Thyroid gland (tissue), 4 donors: ENCODE measurements at regions of chr4 and their contacts with region 1.

Region 1: GRCh38 chr4:153573881-153574802 is 108.0 kb downstream of the TMEM131L start:
- DNase-seq: peak; percentile 58 to 60
- H3K4me3 ChIP-seq: no peak overlapping the region
- H3K27ac ChIP-seq: no peak overlapping the region
- H3K4me1 ChIP-seq: peaks cover 8 to 37% of the 10 kb centered on the region in 2 donors
- H3K27me3 ChIP-seq: no peaks in the 10 kb centered on the region
- CTCF ChIP-seq: peak in 5 of 6 experiments; percentile 34 to 54 (median 46)
- POLR2A ChIP-seq: no peak

Region 2: GRCh38 chr4:152943672-152944071 is 630.5 kb before region 1 on chr4:
- intact Hi-C with region 1: no loop called
- DNase-seq: no peak
- H3K4me3 ChIP-seq: no peak overlapping the region
- H3K27ac ChIP-seq: peak overlapping the region in 1 of 3 donors; percentile 24
- H3K4me1 ChIP-seq: peaks cover 27 to 30% of the 10 kb centered on the region in 2 donors
- H3K27me3 ChIP-seq: no peaks in the 10 kb centered on the region
- CTCF ChIP-seq: no peak
- POLR2A ChIP-seq: no peak

Region 3: GRCh38 chr4:153344131-153345010 is 229.8 kb before region 1 on chr4 and contains the start of gene MND1:
- intact Hi-C with region 1: loop called (anchors 2 kb)
- DNase-seq: peak; percentile 83 to 89
- H3K4me3 ChIP-seq: peak within 1 kb of the TSS; percentile 28 to 71 (median 41)
- H3K27ac ChIP-seq: peak within 1 kb of the TSS in 1 of 3 donors; percentile 28
- H3K4me1 ChIP-seq: peaks cover 4 to 16% of the 10 kb centered on the region in 2 donors
- H3K27me3 ChIP-seq: no peaks in the 10 kb centered on the region
- CTCF ChIP-seq: peak; percentile 68 to 99 (median 86)
- POLR2A ChIP-seq: no peak
- total RNA-seq, gene MND1: 0.89 to 1.6 TPM in 2 of 4 donors, not detected in the others

Region 4: DNA sequence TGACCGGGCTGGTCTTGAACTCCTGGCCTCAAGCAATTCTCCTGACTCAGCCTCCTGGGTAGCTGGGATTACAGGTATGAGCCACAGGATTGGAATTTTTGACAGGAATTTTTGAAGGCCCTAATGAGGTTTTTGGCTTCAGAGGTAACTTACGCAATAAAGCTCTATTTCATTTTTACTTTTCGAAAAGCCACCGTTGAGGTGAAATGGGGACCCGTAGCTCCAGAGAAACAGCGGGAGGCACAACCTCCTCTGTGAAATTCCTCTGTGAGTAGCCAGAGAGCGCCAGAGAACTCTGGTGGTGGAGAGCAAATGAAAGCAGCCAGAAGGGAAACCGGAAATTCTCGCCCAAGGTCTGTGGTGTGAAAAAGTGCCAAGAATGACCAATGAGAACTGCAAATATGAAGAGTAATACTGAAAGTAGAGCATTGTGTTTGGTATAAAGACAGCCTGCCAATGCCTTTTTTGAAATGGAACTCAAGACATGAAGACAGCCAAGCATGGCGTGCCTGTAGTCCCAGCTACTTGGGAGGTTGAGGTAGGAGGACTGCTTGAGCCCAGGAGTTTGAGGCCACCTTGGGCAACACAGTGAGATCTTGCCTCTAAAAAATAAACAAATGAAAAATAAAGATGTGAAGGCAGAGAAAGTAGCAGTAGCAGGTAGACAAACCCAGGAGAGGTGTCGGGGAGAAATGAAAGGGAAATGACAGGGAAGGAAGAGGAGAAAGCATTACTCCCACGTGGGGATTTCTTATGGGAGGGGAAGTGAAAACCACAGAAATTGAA is 141.0 kb before region 1 on chr4:
- intact Hi-C with region 1: loop called (anchors 10 kb)
- DNase-seq: peak; percentile 18 to 39
- H3K4me3 ChIP-seq: no peak overlapping the region
- H3K27ac ChIP-seq: no peak overlapping the region
- H3K4me1 ChIP-seq: no peaks in the 10 kb centered on the region
- H3K27me3 ChIP-seq: no peaks in the 10 kb centered on the region
- CTCF ChIP-seq: peak in 4 of 6 experiments; percentile 10 to 52 (median 48)
- POLR2A ChIP-seq: no peak